Breast epithelium (tissue), 4 donors: ENCODE measurements at regions of chr12 and their contacts with region 1.

Region 1: GRCh38 chr12:67788118-67788517 is 139.6 kb downstream of the DYRK2 start:
- DNase-seq: no peak
- H3K4me3 ChIP-seq: no peak overlapping the region
- H3K27ac ChIP-seq: no peak overlapping the region
- H3K4me1 ChIP-seq: no peaks in the 10 kb centered on the region
- H3K27me3 ChIP-seq: no peaks in the 10 kb centered on the region
- CTCF ChIP-seq: no peak
- POLR2A ChIP-seq: no peak

Region 2: GRCh38 chr12:67441736-67442346 is 346.3 kb before region 1 on chr12:
- intact Hi-C with region 1: no loop called
- DNase-seq: peak; percentile 72 to 79
- H3K4me3 ChIP-seq: no peak overlapping the region
- H3K27ac ChIP-seq: peak overlapping the region in 1 of 2 donors; percentile 23
- H3K4me1 ChIP-seq: no peaks in the 10 kb centered on the region
- H3K27me3 ChIP-seq: no peaks in the 10 kb centered on the region
- CTCF ChIP-seq: peak; percentile 36 to 76 (median 76)
- POLR2A ChIP-seq: no peak

Region 3: GRCh38 chr12:67501362-67501761 is 286.8 kb before region 1 on chr12:
- intact Hi-C with region 1: loop called (anchors 5 kb)
- DNase-seq: no peak
- H3K4me3 ChIP-seq: no peak overlapping the region
- H3K27ac ChIP-seq: no peak overlapping the region
- H3K4me1 ChIP-seq: no peaks in the 10 kb centered on the region
- H3K27me3 ChIP-seq: no peaks in the 10 kb centered on the region
- CTCF ChIP-seq: no peak
- POLR2A ChIP-seq: no peak

Region 4: DNA sequence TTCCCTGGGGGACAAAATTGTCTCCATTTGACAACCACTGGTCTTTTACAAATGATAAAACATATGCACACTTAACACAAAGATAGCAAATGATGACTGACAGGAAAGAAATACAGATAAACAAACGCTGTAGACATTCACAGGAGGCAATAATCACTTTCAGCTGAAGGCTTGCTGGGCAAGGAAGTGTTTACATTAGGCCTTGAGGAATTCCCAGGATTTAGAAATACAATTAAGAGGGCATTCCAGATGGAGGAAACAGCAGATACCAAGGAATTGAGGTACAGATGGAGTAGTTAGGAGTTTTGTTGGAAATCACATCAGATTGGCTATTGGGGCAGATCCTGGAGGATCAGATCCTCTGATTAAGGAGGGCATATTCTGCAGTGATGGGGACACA is 45.7 kb before region 1 on chr12:
- intact Hi-C with region 1: no loop called
- DNase-seq: no peak
- H3K4me3 ChIP-seq: no peak overlapping the region
- H3K27ac ChIP-seq: no peak overlapping the region
- H3K4me1 ChIP-seq: no peaks in the 10 kb centered on the region
- H3K27me3 ChIP-seq: no peaks in the 10 kb centered on the region
- CTCF ChIP-seq: no peak
- POLR2A ChIP-seq: no peak

Region 5: GRCh38 chr12:68358532-68359485 is 570.7 kb after region 1 on chr12:
- intact Hi-C with region 1: no loop called
- DNase-seq: peak in 1 of 2 donors; percentile 57
- H3K4me3 ChIP-seq: no peak overlapping the region
- H3K27ac ChIP-seq: peak overlapping the region; percentile 60 to 74
- H3K4me1 ChIP-seq: no peaks in the 10 kb centered on the region
- H3K27me3 ChIP-seq: no peaks in the 10 kb centered on the region
- CTCF ChIP-seq: peak; percentile 64 to 76 (median 69)
- POLR2A ChIP-seq: no peak